Calu3 (cell line): ENCODE measurements at regions of chr1 and their contacts with region 1.

Region 1: DNA sequence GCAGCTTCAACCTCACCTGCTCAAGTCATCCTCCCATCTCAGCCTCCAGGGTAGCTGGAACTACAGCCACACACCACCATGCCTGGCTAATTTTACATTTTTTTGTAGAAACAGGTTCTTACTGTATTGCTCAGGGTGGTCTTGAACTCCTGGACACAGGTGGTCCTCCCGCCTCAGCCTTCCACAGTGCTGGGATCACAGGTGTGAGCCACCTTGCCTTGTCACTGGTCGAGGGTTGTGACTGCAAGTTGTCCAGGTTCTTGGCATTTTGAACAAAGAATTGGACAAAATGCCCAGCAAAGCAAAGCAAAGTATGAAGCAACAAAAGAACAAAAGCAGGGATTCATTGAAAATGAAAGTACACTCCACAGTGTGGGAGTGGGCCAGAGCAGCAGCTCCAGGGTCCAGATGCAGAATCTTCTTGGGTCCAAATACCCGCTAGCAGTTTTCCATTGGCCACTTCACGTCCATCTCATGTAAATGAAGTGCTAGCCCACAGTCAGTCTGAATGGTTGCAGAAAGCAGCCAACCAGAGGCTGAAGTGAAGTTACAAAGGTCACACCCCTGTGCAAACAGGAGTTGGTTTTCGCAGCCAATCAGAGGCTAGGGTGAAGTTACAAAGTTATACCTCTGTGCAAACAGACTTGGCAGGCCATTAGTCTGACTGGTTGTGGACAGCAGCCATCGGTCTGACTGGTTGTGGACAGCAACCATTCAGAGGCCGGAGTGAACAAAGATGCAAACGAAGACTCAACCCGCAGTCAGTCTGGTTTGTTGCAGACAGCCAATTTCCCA is 109.5 kb upstream of the KIF26B start:
- DNase-seq: peak; percentile 39
- H3K4me3 Mint-ChIP-seq: no peak overlapping the region
- H3K27ac Mint-ChIP-seq: no peak overlapping the region
- H3K4me1 Mint-ChIP-seq: peaks cover 18% of the 10 kb centered on the region
- H3K27me3 Mint-ChIP-seq: no peaks in the 10 kb centered on the region
- CTCF ChIP-seq: no peak

Region 2: GRCh38 chr1:244599937-244600350 is 445.3 kb before region 1 on chr1:
- CTCF ChIA-PET with region 1: interaction called, 4 read pairs
- intact Hi-C with region 1: loop called (anchors 10 kb)
- DNase-seq: peak; percentile 64
- H3K4me3 Mint-ChIP-seq: peak overlapping the region; percentile 62
- H3K27ac Mint-ChIP-seq: peak overlapping the region; percentile 80
- H3K4me1 Mint-ChIP-seq: peaks cover 20% of the 10 kb centered on the region
- H3K27me3 Mint-ChIP-seq: no peaks in the 10 kb centered on the region
- CTCF ChIP-seq: no peak

Region 3: DNA sequence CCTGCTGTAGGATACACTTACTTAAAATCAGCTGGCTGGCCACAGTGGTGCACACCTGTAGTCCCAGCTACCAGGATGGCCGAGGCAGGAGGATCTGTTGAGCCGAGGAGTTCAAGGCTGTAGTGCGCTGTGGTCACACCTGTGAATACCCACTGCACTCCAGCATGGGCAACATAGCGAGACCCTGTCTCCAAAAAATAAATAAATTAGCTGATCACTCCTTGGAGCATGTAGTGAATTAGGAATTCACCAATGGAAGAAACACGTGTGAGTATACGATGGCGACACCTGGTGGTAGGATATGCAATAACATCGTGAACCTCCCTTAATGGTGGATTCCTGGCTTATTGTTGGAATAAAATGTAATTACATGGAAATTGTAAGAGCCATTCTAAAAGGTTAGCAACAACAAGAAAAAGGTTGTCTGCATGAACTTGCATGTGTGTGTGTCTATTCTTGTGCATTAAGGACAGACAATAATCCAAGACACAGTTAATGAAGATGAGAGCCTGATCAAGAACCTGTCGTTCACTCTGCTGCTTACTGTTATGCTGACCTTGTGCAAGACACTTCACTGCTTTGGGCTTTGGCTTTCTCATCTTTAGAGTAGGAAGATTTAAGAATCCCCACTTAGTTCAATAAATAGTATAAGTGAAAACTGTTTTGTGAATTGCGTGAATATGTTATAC is 248.4 kb before region 1 on chr1:
- CTCF ChIA-PET with region 1: interaction called, 24 read pairs
- intact Hi-C with region 1: loop called (anchors 1 kb)
- DNase-seq: peak; percentile 79
- H3K4me3 Mint-ChIP-seq: no peak overlapping the region
- H3K27ac Mint-ChIP-seq: no peak overlapping the region
- H3K4me1 Mint-ChIP-seq: peaks cover 10% of the 10 kb centered on the region
- H3K27me3 Mint-ChIP-seq: no peaks in the 10 kb centered on the region
- CTCF ChIP-seq: peak; percentile 88

Region 4: GRCh38 chr1:244835276-244836134 is 209.8 kb before region 1 on chr1 and contains the start of gene COX20:
- CTCF ChIA-PET with region 1: interaction called, 4 read pairs
- intact Hi-C with region 1: loop called (anchors 2 kb)
- DNase-seq: peak; percentile 84
- H3K4me3 Mint-ChIP-seq: peak within 1 kb of the TSS; percentile 84
- H3K27ac Mint-ChIP-seq: peak within 1 kb of the TSS; percentile 100
- H3K4me1 Mint-ChIP-seq: peaks cover 59% of the 10 kb centered on the region
- H3K27me3 Mint-ChIP-seq: no peaks in the 10 kb centered on the region
- CTCF ChIP-seq: no peak
- total RNA-seq, gene COX20: 22.6 and 32.8 TPM in 2 replicates

Region 5: GRCh38 chr1:244864253-244865027 is 180.8 kb before region 1 on chr1 and contains the start of gene HNRNPU:
- CTCF ChIA-PET with region 1: interaction called, 9 read pairs
- intact Hi-C with region 1: loop called (anchors 1 kb)
- DNase-seq: peak; percentile 99
- H3K4me3 Mint-ChIP-seq: peak within 1 kb of the TSS; percentile 89
- H3K27ac Mint-ChIP-seq: peak within 1 kb of the TSS; percentile 89
- H3K4me1 Mint-ChIP-seq: peaks cover 26% of the 10 kb centered on the region
- H3K27me3 Mint-ChIP-seq: no peaks in the 10 kb centered on the region
- CTCF ChIP-seq: peak; percentile 48
- total RNA-seq, gene HNRNPU: 418 and 453 TPM in 2 replicates

Region 6: DNA sequence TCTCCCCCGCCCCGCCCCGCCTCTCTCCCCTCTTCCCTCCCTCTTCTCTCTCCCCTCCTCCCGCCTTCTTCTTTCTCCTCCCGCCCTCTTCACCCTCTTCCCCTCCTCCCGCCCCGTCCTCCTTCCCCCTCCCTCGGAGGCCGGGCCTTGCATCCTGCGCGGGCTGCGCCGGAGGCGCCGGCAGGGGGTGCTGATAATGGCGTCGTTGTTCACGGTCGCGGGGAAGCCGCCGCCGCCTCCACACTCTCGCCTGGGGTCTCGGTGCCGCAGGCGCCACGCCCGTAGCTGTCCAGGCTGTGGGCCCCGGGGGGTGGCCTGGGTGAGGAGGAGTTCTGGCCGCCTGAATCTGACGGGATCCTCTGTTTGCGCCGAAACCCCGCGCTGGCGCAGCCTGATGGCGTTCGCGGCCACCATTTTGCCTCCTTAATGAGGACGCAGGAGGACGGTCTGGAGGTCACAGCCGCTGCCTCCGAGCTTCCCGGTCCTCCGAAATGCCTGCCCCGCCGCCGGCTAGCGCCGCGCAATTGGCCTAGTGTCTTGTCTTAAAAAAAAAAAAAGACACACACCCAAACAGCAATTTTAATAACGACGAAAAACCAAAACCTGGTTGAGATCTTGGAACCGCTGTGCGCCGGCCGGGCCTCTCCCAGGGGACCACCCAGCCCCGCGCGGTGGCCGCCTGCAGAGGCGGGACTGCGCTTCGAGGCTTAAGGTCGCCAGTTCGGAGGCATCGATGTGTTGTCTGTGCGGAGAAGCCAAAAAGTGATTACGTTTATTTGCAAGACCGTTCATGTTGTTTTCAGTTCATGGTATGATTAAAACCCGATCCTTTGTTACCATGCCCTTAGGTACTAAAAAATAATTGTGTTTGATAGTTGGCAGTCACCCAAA is 74.4 kb before region 1 on chr1:
- CTCF ChIA-PET with region 1: interaction called, 6 read pairs
- intact Hi-C with region 1: loop called (anchors 1 kb)
- DNase-seq: peak; percentile 97
- H3K4me3 Mint-ChIP-seq: peak overlapping the region; percentile 96
- H3K27ac Mint-ChIP-seq: peak overlapping the region; percentile 100
- H3K4me1 Mint-ChIP-seq: peaks cover 20% of the 10 kb centered on the region
- H3K27me3 Mint-ChIP-seq: no peaks in the 10 kb centered on the region
- CTCF ChIP-seq: peak; percentile 58